Activated CD4-positive, alpha-beta T cell treated with anti-CD3 and anti-CD28 coated beads, Interleukin-2, amount 10 ng/mL, durations not matched to agents 24 days and 14 days (primary cell): ENCODE measurements at regions of chr4 and their contacts with region 1.

Region 1: GRCh38 chr4:153344131-153345010 is at the start of gene MND1:
- DNase-seq: peak; percentile 98
- H3K4me3 Mint-ChIP-seq: peak within 1 kb of the TSS; percentile 93
- H3K27ac Mint-ChIP-seq: peak within 1 kb of the TSS; percentile 90
- H3K4me1 Mint-ChIP-seq: peaks cover 46% of the 10 kb centered on the region
- H3K27me3 Mint-ChIP-seq: peaks cover 10% of the 10 kb centered on the region
- total RNA-seq, gene MND1: 15.0 and 18.8 TPM in 2 replicates

Region 2: DNA sequence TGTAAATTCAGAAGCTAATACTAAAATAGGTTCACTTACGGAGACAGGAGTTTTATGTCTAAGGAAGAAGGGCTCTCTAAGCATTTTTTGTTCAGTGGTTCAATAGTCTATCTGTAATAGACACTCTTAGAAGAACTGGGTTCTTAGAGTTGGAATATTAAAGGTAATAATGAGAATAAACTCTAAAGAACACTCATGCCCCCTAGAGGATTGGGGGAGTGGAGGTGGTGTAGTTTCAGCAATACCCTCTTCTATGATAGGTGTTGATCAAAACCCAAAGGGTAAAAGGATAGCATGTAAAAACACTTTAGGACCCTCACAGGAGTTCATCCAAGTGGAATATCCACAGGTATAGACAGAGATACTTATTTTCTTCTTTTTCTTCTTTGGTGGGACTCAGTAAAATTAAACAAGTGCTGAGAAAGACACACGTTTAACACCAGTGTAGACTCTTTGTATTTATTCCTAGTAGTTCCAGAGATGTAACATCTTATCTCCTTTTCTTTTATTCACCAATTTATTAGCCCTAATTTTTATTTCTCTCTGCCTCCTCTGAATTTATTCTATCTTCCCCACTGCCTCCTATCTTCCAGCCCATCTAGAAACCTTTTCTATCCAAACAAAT is 25.6 kb before region 1 on chr4:
- intact Hi-C with region 1: no loop called
- DNase-seq: peak; percentile 62
- H3K4me3 Mint-ChIP-seq: no peak overlapping the region
- H3K27ac Mint-ChIP-seq: no peak overlapping the region
- H3K4me1 Mint-ChIP-seq: no peaks in the 10 kb centered on the region
- H3K27me3 Mint-ChIP-seq: peaks cover 5% of the 10 kb centered on the region

Region 3: DNA sequence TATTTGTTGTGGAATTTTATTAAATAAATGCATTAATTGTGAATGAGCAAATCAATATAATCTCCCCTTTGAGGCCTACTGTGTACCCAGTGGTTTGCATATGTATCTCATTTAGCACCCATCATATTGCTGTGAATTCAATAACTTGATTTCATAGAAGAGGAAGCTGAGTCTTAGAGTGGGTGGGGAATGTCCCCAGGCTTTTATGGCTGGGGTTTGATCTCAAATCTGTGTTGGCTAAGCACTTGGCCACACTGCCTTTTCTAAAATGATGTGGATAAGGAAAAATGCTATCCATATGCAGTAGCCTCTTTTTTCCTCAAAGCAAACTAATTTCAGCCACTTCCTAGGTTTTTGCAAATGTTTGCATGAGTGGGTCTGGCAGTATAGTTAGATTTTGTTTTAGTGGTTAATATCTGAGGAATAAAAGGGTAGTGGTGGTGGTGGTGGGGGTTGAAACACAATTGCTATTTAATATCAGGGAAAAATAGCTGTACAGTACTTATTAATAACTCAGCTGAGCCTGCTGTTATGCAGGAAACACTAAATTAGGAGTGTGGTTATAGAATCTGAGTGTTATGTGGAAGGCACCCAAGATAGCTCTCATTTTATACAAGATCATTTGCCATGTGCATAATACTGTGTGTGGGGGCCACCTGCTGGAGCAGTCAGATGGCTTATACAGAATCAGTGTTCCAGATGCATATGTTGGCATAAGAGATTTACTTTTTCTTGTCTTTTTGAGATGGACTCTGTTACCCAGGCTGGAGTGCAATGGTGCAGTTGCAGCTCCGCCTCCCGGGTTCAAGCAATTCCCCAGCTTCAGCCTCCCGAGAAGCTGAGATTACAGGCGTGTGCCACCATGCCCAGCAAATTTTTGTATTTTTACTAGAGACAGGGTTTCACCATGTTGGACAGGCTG is 229.8 kb after region 1 on chr4:
- intact Hi-C with region 1: loop called (anchors 1 kb)
- DNase-seq: peak; percentile 89
- H3K4me3 Mint-ChIP-seq: no peak overlapping the region
- H3K27ac Mint-ChIP-seq: peak overlapping the region; percentile 52
- H3K4me1 Mint-ChIP-seq: peaks cover 49% of the 10 kb centered on the region
- H3K27me3 Mint-ChIP-seq: no peaks in the 10 kb centered on the region

Region 4: DNA sequence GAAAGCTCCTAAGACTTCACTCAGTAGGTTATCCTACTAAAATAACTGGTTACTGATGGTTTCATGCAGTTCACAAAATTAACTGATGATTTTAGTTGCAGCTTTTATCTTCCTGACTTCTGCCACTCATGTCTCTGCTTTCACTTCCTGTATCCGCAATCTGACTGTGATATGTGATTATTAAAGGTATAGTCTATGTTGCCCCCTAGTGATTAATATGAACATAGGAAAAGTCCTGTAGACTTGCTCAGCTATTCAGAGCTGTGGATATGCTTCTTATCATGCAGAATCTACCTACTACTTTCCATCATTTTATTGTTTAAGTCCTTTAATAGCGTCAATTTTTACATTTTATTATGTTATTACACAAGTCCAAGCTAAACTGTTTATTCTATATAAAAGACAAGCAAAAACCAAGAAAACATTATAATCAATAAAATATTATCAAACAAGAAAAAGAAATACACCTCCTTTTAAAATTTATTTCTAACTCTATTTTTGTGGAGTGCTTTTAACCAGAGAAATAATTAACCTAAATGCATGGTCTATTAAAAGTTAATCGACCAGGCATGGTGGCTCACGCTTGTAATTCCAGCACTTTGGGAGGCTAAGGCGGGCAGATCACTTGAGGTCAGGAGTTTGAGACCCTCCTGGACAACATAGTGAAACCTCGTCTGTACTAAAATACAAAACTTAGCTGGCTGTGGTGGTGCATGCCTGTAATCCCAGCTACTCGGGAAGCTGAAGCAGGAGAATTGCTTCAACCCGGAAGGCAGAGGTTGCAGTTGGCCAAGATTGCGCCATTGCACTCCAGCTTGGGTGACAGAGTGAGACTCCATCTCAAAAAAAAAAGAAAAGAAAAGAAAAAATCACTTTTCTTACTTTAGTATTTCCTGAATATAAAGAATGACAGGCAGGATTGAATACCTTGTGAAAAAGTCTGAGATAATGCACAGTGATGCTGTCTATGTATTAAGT is 299.3 kb after region 1 on chr4:
- intact Hi-C with region 1: loop called (anchors 2 kb)
- DNase-seq: no peak
- H3K4me3 Mint-ChIP-seq: no peak overlapping the region
- H3K27ac Mint-ChIP-seq: no peak overlapping the region
- H3K4me1 Mint-ChIP-seq: peaks cover 19% of the 10 kb centered on the region
- H3K27me3 Mint-ChIP-seq: no peaks in the 10 kb centered on the region

Region 5: DNA sequence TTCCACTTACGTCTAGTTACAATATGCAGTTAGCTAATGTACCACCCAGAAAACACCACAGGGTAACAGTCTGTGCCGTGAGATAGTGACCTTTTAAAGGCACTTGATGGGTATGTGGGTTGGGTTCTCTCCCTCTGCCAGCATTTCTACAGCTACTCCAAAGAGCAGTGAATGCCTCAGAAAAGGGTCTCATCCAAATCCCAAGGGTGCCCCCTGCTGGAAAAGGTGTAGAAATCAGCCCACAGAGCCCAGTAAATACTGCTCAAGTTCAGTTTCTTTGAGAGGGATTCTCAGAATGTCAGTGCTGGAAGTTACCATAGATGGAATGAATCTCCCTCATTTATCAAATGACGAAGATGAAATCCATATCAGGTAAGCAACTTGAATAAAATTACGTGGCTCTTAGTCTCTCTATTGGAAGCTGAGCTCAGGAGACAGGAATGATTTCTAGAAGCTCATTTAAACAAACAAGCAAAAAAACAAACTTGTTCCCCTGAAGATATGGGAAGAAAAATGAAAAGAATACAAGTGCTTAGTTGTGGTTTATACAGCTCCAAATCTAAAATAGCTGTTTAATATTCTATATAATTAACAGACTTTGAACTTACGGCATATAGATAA is 405.9 kb after region 1 on chr4:
- intact Hi-C with region 1: loop called (anchors 1 kb)
- DNase-seq: peak; percentile 91
- H3K4me3 Mint-ChIP-seq: no peak overlapping the region
- H3K27ac Mint-ChIP-seq: no peak overlapping the region
- H3K4me1 Mint-ChIP-seq: no peaks in the 10 kb centered on the region
- H3K27me3 Mint-ChIP-seq: peaks cover 16% of the 10 kb centered on the region

Region 6: DNA sequence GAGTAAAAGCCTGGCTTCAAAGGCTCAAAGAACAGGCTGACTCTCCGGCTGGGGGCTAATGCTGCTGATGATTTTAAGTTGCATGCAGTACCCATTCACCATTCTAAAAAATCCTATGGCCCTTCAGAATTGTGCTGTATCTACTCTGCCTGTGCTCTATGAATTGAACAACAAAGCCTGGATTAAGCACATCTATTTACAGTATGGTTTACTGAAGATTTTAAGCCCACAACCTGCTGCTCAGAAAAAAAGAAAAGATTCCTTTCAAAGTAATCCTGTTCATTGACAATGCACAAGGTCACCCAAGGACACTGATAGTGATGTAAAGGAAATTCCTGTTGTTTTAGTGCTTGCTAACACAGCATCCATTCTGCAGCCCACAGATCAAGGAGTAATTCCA is 529.4 kb after region 1 on chr4:
- intact Hi-C with region 1: no loop called
- DNase-seq: no peak
- H3K4me3 Mint-ChIP-seq: no peak overlapping the region
- H3K27ac Mint-ChIP-seq: no peak overlapping the region
- H3K4me1 Mint-ChIP-seq: no peaks in the 10 kb centered on the region
- H3K27me3 Mint-ChIP-seq: no peaks in the 10 kb centered on the region